ENCODE measurements at regions of chr16 and their contacts with region 1.

Region 1: GRCh38 chr16:27109666-27110523 is 43.2 kb downstream of the C16orf82 start:
- DNase-seq: no peak
- ATAC-seq: peak; percentile 83
- H3K4me3 ChIP-seq: no peak overlapping the region
- H3K27ac ChIP-seq: no peak overlapping the region
- H3K4me1 ChIP-seq: peaks cover 4% of the 10 kb centered on the region; the same call in 1 of the 2 replicates
- H3K27me3 ChIP-seq: peaks cover 0 to 2% of the 10 kb centered on the region in 2 experiments; a peak in 1 of 4 replicates
- CTCF ChIP-seq: peak; percentile 70 to 87 (median 82)
- EP300 ChIP-seq: no peak
- POLR2A ChIP-seq: no peak
- RAD21 ChIP-seq: peak; percentile 72

Region 2: GRCh38 chr16:27169511-27170071 is 59.7 kb after region 1 on chr16:
- CTCF ChIA-PET with region 1: interaction called, 4 read pairs
- POLR2A ChIA-PET with region 1: interaction called, 10 read pairs
- RAD21 ChIA-PET with region 1: no interaction called
- SMC1A ChIA-PET with region 1: no interaction called
- in situ Hi-C with region 1: no loop called
- intact Hi-C with region 1: no loop called
- DNase-seq: peak; percentile 13
- ATAC-seq: peak; percentile 84
- H3K4me3 ChIP-seq: no peak overlapping the region
- H3K27ac ChIP-seq: no peak overlapping the region
- H3K4me1 ChIP-seq: peaks cover 13% of the 10 kb centered on the region
- H3K27me3 ChIP-seq: 0 out of 4 replicates have a peak, but pooled peaks cover 0 to 2% of the 10 kb centered on the region in 2 experiments
- CTCF ChIP-seq: peak in 1 of 3 experiments; percentile 6; a peak in 2 of 6 replicates
- EP300 ChIP-seq: no peak
- POLR2A ChIP-seq: no peak
- RAD21 ChIP-seq: 0 out of 2 replicates have a peak, but pooled peaks have one; percentile 8

Measured in GM12878 (cell line).